PC-3 (cell line): ENCODE measurements at regions of chr7 and their contacts with region 1.

Region 1: GRCh38 chr7:146115851-146116520 is 615 bp upstream of the CNTNAP2 start:
- DNase-seq: peak; percentile 46
- ATAC-seq: peak; percentile 70
- H3K4me3 ChIP-seq: peak overlapping the region; percentile 66
- H3K27ac ChIP-seq: no peak overlapping the region
- H3K4me1 ChIP-seq: no peaks in the 10 kb centered on the region
- H3K27me3 ChIP-seq: peaks cover 19% of the 10 kb centered on the region
- CTCF ChIP-seq: no peak

Region 2: DNA sequence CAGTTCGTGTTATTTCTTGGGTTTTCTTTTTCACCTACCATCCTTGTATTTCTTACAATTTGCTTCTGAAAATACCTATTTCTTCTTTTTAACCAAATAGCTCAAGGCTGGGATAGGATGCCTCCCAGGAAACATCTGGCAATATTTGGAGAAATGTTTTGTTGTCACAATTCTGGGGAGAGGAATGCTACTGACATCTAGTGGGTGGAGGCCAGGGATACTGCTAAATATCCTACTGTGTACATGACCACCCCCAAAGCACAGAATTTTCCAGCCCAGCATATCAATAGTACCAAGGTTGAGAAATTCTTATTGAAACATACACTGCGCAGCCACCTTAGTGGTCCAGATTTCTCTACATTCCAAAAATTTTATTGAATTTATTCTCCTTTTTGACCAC is 56.1 kb after region 1 on chr7:
- CTCF ChIA-PET with region 1: interaction called, 3 read pairs
- POLR2A ChIA-PET with region 1: no interaction called
- intact Hi-C with region 1: loop called (anchors 5 kb)
- DNase-seq: peak; percentile 8
- ATAC-seq: peak; percentile 45; the same call in 1 of the 2 replicates
- H3K4me3 ChIP-seq: no peak overlapping the region
- H3K27ac ChIP-seq: no peak overlapping the region
- H3K4me1 ChIP-seq: no peaks in the 10 kb centered on the region
- H3K27me3 ChIP-seq: no peaks in the 10 kb centered on the region
- CTCF ChIP-seq: peak; percentile 41

Region 3: GRCh38 chr7:146262527-146262926 is 146.5 kb after region 1 on chr7:
- CTCF ChIA-PET with region 1: no interaction called
- POLR2A ChIA-PET with region 1: no interaction called
- intact Hi-C with region 1: no loop called
- DNase-seq: no peak
- ATAC-seq: no peak
- H3K4me3 ChIP-seq: no peak overlapping the region
- H3K27ac ChIP-seq: no peak overlapping the region
- H3K4me1 ChIP-seq: no peaks in the 10 kb centered on the region
- H3K27me3 ChIP-seq: no peaks in the 10 kb centered on the region
- CTCF ChIP-seq: no peak

Region 4: GRCh38 chr7:146331369-146331768 is 215.4 kb after region 1 on chr7:
- CTCF ChIA-PET with region 1: no interaction called
- POLR2A ChIA-PET with region 1: no interaction called
- intact Hi-C with region 1: no loop called
- DNase-seq: no peak
- ATAC-seq: no peak
- H3K4me3 ChIP-seq: no peak overlapping the region
- H3K27ac ChIP-seq: no peak overlapping the region
- H3K4me1 ChIP-seq: no peaks in the 10 kb centered on the region
- H3K27me3 ChIP-seq: no peaks in the 10 kb centered on the region
- CTCF ChIP-seq: no peak